Heart left ventricle (tissue), 16 donors: ENCODE measurements at regions of chr17 and their contacts with region 1.

Region 1: DNA sequence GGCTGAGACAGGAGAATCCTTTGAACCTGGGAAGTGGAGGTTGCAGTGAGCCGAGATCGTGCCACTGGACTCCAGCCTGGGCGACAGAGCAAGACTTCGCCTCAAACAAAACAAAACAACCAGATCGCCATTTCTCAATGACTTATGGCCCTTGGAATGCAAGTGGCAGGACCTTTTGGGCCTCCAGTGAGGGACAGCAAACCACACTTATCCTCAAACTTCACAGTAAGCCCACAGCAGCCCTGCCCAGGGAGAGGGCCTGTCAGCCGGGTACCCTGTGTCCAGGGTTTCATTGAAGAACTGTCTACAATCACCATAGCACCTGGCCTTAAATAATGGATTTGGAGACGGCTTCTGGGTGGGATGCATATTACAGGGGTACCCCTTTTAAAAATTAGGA is 11.7 kb downstream of the TRAF4 start:
- DNase-seq: no peak
- ATAC-seq: no peak
- H3K4me3 ChIP-seq: no peak overlapping the region
- H3K27ac ChIP-seq: no peak overlapping the region
- H3K4me1 ChIP-seq: peaks cover 0 to 9% (median 2%) of the 10 kb centered on the region in 12 donors
- H3K27me3 ChIP-seq: no peaks in the 10 kb centered on the region
- CTCF ChIP-seq: no peak
- POLR2A ChIP-seq: no peak

Region 2: GRCh38 chr17:28552246-28552999 is 203.1 kb before region 1 on chr17 and contains the start of gene UNC119:
- intact Hi-C with region 1: no loop called
- DNase-seq: peak; percentile 73 to 90 (median 86)
- ATAC-seq: peak; percentile 83 to 97 (median 94)
- H3K4me3 ChIP-seq: peak within 1 kb of the TSS; percentile 80 to 98 (median 92)
- H3K27ac ChIP-seq: peak within 1 kb of the TSS in 11 of 12 donors; percentile 47 to 85 (median 70)
- H3K4me1 ChIP-seq: peaks cover 0 to 50% (median 15%) of the 10 kb centered on the region in 12 donors
- H3K27me3 ChIP-seq: no peaks in the 10 kb centered on the region
- CTCF ChIP-seq: no peak
- POLR2A ChIP-seq: peak in 1 of 2 donors; percentile 76
- total RNA-seq, gene UNC119: 12.8 to 30.7 (median 19.2) TPM

Region 3: DNA sequence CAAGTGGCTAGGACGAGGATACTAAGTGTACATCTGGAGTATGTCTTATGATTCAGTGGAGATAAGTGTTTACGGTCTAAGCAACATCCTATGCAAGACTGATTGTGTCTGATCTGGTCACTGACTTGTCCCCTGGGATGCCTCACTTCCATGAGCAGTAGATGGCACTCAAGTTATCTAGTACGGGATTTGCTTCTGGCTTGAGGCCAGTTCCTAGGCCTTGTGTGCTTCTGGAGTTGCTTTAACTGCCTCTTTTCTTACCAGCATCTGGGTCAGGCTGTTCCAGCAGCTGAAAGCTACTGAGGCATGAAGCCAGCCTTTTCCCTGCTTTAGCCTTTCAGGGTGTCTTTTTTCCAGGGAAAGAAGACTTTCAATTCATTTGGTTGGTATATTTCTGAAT is 70.5 kb before region 1 on chr17:
- intact Hi-C with region 1: no loop called
- DNase-seq: no peak
- ATAC-seq: peak in 3 of 4 donors; percentile 37 to 48 (median 44)
- H3K4me3 ChIP-seq: no peak overlapping the region
- H3K27ac ChIP-seq: no peak overlapping the region
- H3K4me1 ChIP-seq: no peaks in the 10 kb centered on the region
- H3K27me3 ChIP-seq: no peaks in the 10 kb centered on the region
- CTCF ChIP-seq: peak in 2 of 12 donors; percentile 9 to 19
- POLR2A ChIP-seq: no peak

Region 4: GRCh38 chr17:28908640-28909167 is 153.2 kb after region 1 on chr17:
- intact Hi-C with region 1: loop called in 5 of 10 experiments (anchors 5 to 10 kb)
- DNase-seq: peak in 3 of 5 donors; percentile 41 to 48 (median 44)
- ATAC-seq: peak; percentile 48 to 68 (median 65)
- H3K4me3 ChIP-seq: no peak overlapping the region
- H3K27ac ChIP-seq: peak overlapping the region in 10 of 12 donors; percentile 14 to 78 (median 48)
- H3K4me1 ChIP-seq: peaks cover 0 to 29% (median 21%) of the 10 kb centered on the region in 12 donors
- H3K27me3 ChIP-seq: no peaks in the 10 kb centered on the region
- CTCF ChIP-seq: no peak
- POLR2A ChIP-seq: no peak

Region 5: DNA sequence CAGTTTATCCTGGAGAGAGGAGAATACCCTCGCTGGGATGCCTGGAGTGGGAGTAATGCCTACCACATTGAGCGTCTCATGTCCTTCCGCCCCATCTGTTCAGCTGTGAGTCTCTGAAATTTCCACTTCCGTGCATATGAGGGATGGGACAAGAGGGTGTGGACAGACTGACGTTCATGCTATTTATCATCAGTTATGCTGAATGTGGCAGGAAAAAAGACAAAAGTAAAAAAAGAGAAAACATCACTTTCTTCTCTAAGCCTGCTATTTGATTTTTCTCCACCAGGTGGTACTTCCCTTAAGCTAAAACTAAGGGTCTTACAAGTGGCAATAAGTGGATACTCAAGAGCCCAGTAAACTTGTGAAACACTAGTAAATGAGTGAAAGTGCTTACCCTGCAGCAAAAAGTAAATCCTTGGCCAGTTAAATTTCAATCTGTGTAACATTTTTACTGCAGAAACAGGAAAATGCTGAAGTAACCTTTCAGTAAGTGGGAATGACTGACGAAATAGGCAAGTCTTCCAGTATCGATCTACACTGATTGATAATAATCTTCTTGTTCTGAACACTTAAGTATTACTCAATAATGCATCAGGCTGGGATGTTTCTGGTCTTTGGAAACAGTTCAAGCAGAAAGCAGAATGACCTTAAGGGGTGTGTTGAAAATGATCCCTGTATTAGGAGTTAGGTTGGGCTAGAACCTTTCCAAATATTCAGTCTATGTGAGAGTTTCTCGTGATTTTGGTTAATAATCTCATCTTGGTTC is 496.8 kb after region 1 on chr17:
- intact Hi-C with region 1: no loop called
- DNase-seq: no peak
- ATAC-seq: no peak
- H3K4me3 ChIP-seq: no peak overlapping the region
- H3K27ac ChIP-seq: no peak overlapping the region
- H3K4me1 ChIP-seq: peaks cover 0 to 36% (median 24%) of the 10 kb centered on the region in 12 donors
- H3K27me3 ChIP-seq: no peaks in the 10 kb centered on the region
- CTCF ChIP-seq: peak in 11 of 12 donors; percentile 1 to 46 (median 31)
- POLR2A ChIP-seq: no peak